Gastrocnemius medialis (tissue), 4 donors: ENCODE measurements at regions of chr9 and their contacts with region 1.

Region 1: GRCh38 chr9:6055213-6055612 is 39.8 kb upstream of the RANBP6 start:
- DNase-seq: no peak
- ATAC-seq: peak; percentile 90 to 98
- H3K4me3 ChIP-seq: no peak overlapping the region
- H3K27ac ChIP-seq: no peak overlapping the region
- H3K4me1 ChIP-seq: no peaks in the 10 kb centered on the region
- H3K27me3 ChIP-seq: no peaks in the 10 kb centered on the region
- CTCF ChIP-seq: peak; percentile 50 to 71 (median 61)
- POLR2A ChIP-seq: no peak

Region 2: DNA sequence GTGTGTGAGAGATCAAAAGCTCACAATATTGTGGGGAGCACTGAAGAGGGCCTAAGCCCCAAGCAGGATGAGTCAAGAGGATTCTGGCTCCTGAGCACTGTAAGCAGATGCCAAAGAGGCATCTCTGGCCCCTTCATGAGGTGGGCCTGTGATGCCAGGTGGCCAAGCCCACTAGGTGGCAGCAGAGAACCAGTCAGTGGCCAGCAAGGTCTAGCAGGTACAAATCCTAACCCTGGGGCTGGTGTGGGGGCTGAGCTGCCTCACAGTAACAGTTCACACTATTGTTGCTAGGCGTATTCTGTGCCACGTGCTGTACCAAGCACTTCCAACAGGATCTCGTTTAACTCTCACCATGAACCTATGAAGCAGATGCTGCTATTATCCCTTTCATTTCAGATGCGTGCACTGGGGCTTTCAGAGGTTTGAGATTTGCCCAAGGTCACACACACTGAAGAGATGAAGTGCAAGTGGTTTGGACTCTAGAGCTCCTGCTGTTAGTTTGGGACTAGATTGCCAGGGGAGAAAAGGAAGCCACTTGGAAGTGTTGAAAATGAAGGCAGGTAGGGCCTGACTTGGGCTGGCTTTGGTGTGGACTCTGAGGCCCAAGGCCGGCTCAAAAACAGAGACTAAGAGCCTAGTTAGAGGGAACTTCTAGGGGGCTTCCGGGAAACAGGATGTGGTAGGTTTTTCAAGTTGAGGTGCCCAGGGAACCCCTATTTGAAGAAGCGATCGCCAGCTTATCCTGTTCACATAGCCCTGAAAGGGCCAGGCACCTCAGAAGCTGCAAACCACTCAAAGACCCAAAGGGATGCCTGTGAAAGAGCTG is 168.9 kb before region 1 on chr9:
- in situ Hi-C with region 1: loop called (anchors 5 to 10 kb)
- intact Hi-C with region 1: loop called (anchors 1 kb)
- DNase-seq: peak; percentile 25 to 57
- ATAC-seq: peak; percentile 50 to 82
- H3K4me3 ChIP-seq: no peak overlapping the region
- H3K27ac ChIP-seq: no peak overlapping the region
- H3K4me1 ChIP-seq: no peaks in the 10 kb centered on the region
- H3K27me3 ChIP-seq: no peaks in the 10 kb centered on the region
- CTCF ChIP-seq: peak; percentile 58 to 90 (median 79)
- POLR2A ChIP-seq: no peak

Region 3: GRCh38 chr9:5949103-5949699 is 106.0 kb before region 1 on chr9:
- in situ Hi-C with region 1: loop called in 1 of 4 experiments (anchors 25 kb)
- intact Hi-C with region 1: no loop called
- DNase-seq: no peak
- ATAC-seq: peak; percentile 60 to 68
- H3K4me3 ChIP-seq: peak overlapping the region; percentile 7 to 40 (median 22)
- H3K27ac ChIP-seq: peak overlapping the region in 3 of 4 donors; percentile 13 to 38 (median 24)
- H3K4me1 ChIP-seq: peaks cover 27 to 29% of the 10 kb centered on the region in 2 donors
- H3K27me3 ChIP-seq: no peaks in the 10 kb centered on the region
- CTCF ChIP-seq: no peak
- POLR2A ChIP-seq: no peak

Region 4: GRCh38 chr9:6008169-6008979 is 46.8 kb before region 1 on chr9:
- in situ Hi-C with region 1: no loop called
- intact Hi-C with region 1: no loop called
- DNase-seq: peak; percentile 97 to 98
- ATAC-seq: peak; percentile 92 to 94
- H3K4me3 ChIP-seq: peak overlapping the region; percentile 81 to 96 (median 94)
- H3K27ac ChIP-seq: peak overlapping the region; percentile 96 to 99 (median 99)
- H3K4me1 ChIP-seq: peaks cover 56 to 71% of the 10 kb centered on the region in 2 donors
- H3K27me3 ChIP-seq: no peaks in the 10 kb centered on the region
- CTCF ChIP-seq: no peak
- POLR2A ChIP-seq: peak; percentile 62 to 69

Region 5: GRCh38 chr9:6098431-6098830 is 43.2 kb after region 1 on chr9:
- in situ Hi-C with region 1: no loop called
- intact Hi-C with region 1: no loop called
- DNase-seq: no peak
- ATAC-seq: no peak
- H3K4me3 ChIP-seq: no peak overlapping the region
- H3K27ac ChIP-seq: no peak overlapping the region
- H3K4me1 ChIP-seq: no peaks in the 10 kb centered on the region
- H3K27me3 ChIP-seq: no peaks in the 10 kb centered on the region
- CTCF ChIP-seq: no peak
- POLR2A ChIP-seq: no peak

Region 6: GRCh38 chr9:6113312-6113711 is 58.1 kb after region 1 on chr9:
- in situ Hi-C with region 1: no loop called
- intact Hi-C with region 1: no loop called
- DNase-seq: no peak
- ATAC-seq: no peak
- H3K4me3 ChIP-seq: no peak overlapping the region
- H3K27ac ChIP-seq: no peak overlapping the region
- H3K4me1 ChIP-seq: no peaks in the 10 kb centered on the region
- H3K27me3 ChIP-seq: no peaks in the 10 kb centered on the region
- CTCF ChIP-seq: no peak
- POLR2A ChIP-seq: no peak